ENCODE measurements at regions of chr14 and their contacts with region 1.

Region 1: DNA sequence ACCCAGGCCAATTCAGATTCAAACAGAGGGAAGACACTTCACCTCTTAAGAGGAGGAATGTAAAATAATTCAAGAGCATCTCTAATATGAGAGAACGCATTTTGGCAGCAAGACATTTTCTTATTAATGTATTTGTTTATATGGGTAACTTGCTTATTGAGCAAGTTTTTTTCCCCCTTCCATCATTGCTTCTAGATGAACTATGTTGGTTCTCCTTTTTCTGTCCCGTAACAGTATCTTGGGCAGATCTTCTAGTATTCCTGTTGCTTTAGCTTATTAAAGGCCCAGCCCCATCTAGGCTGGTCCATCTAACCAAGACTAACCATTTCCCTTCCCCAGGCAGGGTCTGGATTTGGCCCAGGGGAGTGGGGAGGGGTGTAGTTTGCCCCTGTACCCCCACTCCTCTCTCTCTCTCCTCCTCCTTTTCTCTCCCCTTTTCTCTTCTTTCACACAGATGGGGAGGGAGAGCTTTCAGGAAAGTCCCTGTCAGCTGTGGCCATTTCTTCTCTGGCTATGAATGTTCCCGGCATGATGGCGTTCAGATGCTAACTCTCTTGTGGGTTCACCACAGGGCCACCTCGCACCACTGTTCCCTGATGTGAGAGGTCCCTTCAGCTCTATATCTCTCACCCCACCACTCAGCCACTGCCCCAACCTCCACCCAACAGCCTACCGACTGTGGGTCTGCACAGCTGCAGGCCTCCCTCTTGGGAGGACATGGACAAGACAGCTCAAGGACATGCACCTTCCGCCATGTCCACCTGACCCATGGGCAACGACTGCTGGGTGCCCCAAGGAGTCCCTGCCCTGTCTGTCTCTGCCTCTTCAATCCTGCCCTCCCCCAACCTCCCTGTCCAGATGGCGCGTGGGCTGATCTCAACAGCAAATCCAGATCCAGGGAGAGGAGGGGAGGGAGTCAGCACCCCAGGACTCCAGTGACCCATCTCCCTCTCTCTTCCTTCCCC is 15.8 kb upstream of the RPS6KL1 start:
- DNase-seq: no peak
- H3K4me3 ChIP-seq: no peak overlapping the region
- CTCF ChIP-seq: no peak

Region 2: GRCh38 chr14:74922739-74923401 is 15.9 kb before region 1 on chr14 and contains the start of gene RPS6KL1:
- CTCF ChIA-PET with region 1: interaction called, 10 read pairs
- POLR2A ChIA-PET with region 1: no interaction called
- DNase-seq: no peak
- H3K4me3 ChIP-seq: peak within 1 kb of the TSS; percentile 49
- CTCF ChIP-seq: no peak

Measured in AG04449 (cell line).